ENCODE measurements at regions of chr11 and their contacts with region 1.

Region 1: GRCh38 chr11:72030472-72031045 is 31.9 kb downstream of the IL18BP start:
- DNase-seq: no peak
- H3K4me3 ChIP-seq: no peak overlapping the region
- H3K27ac ChIP-seq: no peak overlapping the region
- H3K4me1 ChIP-seq: peaks cover under 1% of the 10 kb centered on the region
- H3K27me3 ChIP-seq: no peaks in the 10 kb centered on the region
- CTCF ChIP-seq: no peak

Region 2: GRCh38 chr11:72048766-72049456 is 18.4 kb after region 1 on chr11:
- CTCF ChIA-PET with region 1: no interaction called
- dilution Hi-C with region 1: no loop called
- in situ Hi-C with region 1: no loop called
- intact Hi-C with region 1: no loop called
- DNase-seq: no peak
- H3K4me3 ChIP-seq: no peak overlapping the region
- H3K27ac ChIP-seq: no peak overlapping the region
- H3K4me1 ChIP-seq: no peaks in the 10 kb centered on the region
- H3K27me3 ChIP-seq: no peaks in the 10 kb centered on the region
- CTCF ChIP-seq: no peak

Region 3: DNA sequence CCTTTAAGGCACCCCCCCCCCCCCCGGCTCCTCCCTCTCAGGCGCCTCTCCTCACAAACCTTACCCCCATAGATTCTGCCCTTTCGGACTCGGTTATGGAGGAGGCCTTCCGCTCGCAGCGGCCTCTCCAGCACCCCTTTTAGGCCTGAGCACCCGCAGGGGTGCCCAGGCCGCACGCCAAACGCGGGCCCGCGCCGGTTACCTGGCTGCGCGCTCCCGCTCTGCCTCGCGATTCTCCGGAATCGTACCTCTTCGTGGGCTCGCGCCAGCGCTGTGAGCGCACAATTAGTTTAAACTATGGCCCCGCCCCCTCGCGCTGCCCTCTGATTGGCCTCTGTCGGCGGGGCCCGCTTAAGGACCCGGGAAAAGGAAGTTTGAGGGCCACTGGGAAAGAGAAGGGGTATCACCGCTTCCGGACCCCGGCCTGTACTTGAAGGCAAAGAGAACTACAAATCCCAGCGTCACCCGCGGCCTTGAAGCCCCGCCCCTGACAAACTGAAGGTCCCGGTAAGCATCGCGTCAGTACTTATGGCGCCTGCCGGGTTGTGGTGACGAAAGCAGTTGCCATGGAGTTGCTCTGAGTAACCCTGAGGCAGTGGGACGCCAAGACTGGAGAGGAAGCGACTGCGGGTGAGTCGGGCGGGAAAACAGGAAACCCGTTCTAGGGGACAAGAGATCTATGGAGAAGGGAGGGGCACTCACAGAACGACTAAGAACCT is 49.9 kb after region 1 on chr11 and contains the starts of genes LRRC51 and NUMA1:
- CTCF ChIA-PET with region 1: interaction called, 4 read pairs
- dilution Hi-C with region 1: no loop called
- in situ Hi-C with region 1: no loop called
- intact Hi-C with region 1: loop called (anchors 1 kb)
- DNase-seq: peak; percentile 100
- H3K4me3 ChIP-seq: peak within 1 kb of the TSS; percentile 69 to 80 (median 69)
- H3K27ac ChIP-seq: peak within 1 kb of the TSS; percentile 90
- H3K4me1 ChIP-seq: peaks cover 19% of the 10 kb centered on the region
- H3K27me3 ChIP-seq: no peaks in the 10 kb centered on the region
- CTCF ChIP-seq: no peak
- total RNA-seq, gene LRRC51: 4.3 to 10.3 TPM
- total RNA-seq, gene NUMA1: 126 to 175 TPM

Region 4: GRCh38 chr11:72102946-72103753 is 72.6 kb after region 1 on chr11 and contains the start of gene LAMTOR1:
- CTCF ChIA-PET with region 1: interaction called, 5 read pairs
- dilution Hi-C with region 1: no loop called
- in situ Hi-C with region 1: no loop called
- intact Hi-C with region 1: loop called (anchors 1 kb)
- DNase-seq: peak; percentile 95
- H3K4me3 ChIP-seq: peak within 1 kb of the TSS; percentile 80 to 94 (median 84)
- H3K27ac ChIP-seq: peak within 1 kb of the TSS; percentile 86
- H3K4me1 ChIP-seq: peaks cover 31% of the 10 kb centered on the region
- H3K27me3 ChIP-seq: no peaks in the 10 kb centered on the region
- CTCF ChIP-seq: peak; percentile 35 to 40
- total RNA-seq, gene LAMTOR1: 105 to 183 TPM

Region 5: GRCh38 chr11:72238040-72238450 is 207.5 kb after region 1 on chr11:
- CTCF ChIA-PET with region 1: no interaction called
- dilution Hi-C with region 1: no loop called
- in situ Hi-C with region 1: no loop called
- intact Hi-C with region 1: loop called (anchors 1 kb)
- DNase-seq: peak; percentile 19
- H3K4me3 ChIP-seq: no peak overlapping the region
- H3K27ac ChIP-seq: no peak overlapping the region
- H3K4me1 ChIP-seq: peaks cover 9% of the 10 kb centered on the region
- H3K27me3 ChIP-seq: peaks cover under 1% of the 10 kb centered on the region
- CTCF ChIP-seq: peak; percentile 69 to 79

Region 6: DNA sequence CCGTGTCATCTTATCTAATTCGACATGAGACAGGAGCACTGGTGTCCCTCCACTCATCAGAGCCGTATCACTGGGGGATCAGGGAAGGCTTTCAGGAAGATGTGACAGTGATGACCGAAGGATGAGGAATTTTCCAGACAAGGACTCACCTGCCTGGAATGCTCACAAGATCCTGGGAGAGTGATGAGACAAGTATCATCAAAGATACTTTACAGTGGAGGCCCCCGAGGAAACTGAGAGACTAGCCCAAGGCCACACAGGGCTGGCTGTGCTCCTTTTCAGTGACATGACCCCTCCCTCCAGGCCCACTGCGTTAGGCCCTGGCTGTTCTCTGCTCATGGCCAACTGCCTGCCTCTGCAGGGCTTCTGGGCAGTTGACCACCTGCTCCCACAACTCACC is 390.8 kb after region 1 on chr11:
- CTCF ChIA-PET with region 1: no interaction called
- dilution Hi-C with region 1: loop called (anchors 5 kb)
- in situ Hi-C with region 1: loop called in 1 of 2 experiments (anchors 25 kb)
- intact Hi-C with region 1: no loop called
- DNase-seq: peak; percentile 17
- H3K4me3 ChIP-seq: no peak overlapping the region
- H3K27ac ChIP-seq: no peak overlapping the region
- H3K4me1 ChIP-seq: peaks cover 8% of the 10 kb centered on the region
- H3K27me3 ChIP-seq: no peaks in the 10 kb centered on the region
- CTCF ChIP-seq: no peak

Measured in mammary epithelial cell (primary cell).